H1 (cell line): ENCODE measurements at regions of chr15 and their contacts with region 1.

Region 1: DNA sequence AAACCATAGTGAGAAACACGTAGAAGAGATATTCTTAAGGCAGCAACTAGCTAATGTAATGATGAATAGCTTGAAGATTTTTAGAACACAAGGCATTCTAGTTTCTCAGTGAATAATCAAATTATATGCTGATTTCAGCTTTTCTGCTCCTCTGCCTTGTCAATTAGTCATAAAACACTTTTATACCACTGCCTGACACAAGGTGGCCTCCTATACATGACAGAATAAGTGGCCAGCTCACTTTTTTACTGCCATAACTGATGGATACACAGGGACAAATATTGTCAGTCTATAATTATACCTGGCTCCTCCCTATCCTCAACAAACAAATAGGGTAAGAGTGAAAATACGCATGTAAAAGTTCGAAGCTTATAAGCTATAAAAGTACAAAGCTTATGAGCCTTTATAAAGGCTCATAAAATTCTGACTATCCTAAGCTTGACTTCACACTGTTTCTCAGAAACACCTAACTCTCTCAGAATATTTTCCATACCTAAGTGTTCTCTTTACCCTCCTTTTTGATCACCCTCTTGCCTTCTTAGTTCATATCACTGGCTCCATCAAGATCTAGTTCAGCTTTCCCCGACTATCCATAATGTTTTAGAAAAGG is 81.6 kb downstream of the HERC1 start:
- DNase-seq: no peak
- H3K4me3 ChIP-seq: no peak overlapping the region
- H3K27ac ChIP-seq: no peak overlapping the region
- H3K4me1 ChIP-seq: no peaks in the 10 kb centered on the region
- H3K27me3 ChIP-seq: no peaks in the 10 kb centered on the region
- CTCF ChIP-seq: peak in 2 of 3 experiments; percentile 68 to 70; a peak in 3 of 4 replicates
- EP300 ChIP-seq: no peak
- POLR2A ChIP-seq: no peak
- RAD21 ChIP-seq: peak; percentile 90 to 93

Region 2: DNA sequence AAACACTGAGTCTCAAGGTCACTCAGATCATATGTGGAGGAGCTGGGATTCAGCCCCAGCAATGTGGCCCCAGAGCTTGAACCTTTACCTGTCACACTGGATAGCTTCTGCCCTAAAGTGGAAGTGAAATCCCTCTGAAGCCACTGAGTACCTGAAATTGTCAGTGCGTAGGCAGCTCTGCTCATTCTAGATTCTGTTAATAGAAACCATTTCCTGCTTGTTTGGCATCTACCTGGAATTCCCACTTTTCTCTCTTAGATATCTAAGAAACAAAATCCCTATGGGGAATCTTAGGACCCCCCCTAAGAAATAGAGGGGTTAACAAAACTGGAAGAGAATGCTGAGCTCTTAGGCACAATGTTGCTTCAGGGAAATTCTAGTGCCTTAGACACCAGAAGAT is 125.2 kb before region 1 on chr15:
- CTCF ChIA-PET with region 1: no interaction called
- POLR2A ChIA-PET with region 1: no interaction called
- DNase-seq: no peak
- H3K4me3 ChIP-seq: no peak overlapping the region
- H3K27ac ChIP-seq: no peak overlapping the region
- H3K4me1 ChIP-seq: no peaks in the 10 kb centered on the region
- H3K27me3 ChIP-seq: no peaks in the 10 kb centered on the region
- CTCF ChIP-seq: no peak
- EP300 ChIP-seq: no peak
- POLR2A ChIP-seq: no peak
- RAD21 ChIP-seq: no peak

Region 3: DNA sequence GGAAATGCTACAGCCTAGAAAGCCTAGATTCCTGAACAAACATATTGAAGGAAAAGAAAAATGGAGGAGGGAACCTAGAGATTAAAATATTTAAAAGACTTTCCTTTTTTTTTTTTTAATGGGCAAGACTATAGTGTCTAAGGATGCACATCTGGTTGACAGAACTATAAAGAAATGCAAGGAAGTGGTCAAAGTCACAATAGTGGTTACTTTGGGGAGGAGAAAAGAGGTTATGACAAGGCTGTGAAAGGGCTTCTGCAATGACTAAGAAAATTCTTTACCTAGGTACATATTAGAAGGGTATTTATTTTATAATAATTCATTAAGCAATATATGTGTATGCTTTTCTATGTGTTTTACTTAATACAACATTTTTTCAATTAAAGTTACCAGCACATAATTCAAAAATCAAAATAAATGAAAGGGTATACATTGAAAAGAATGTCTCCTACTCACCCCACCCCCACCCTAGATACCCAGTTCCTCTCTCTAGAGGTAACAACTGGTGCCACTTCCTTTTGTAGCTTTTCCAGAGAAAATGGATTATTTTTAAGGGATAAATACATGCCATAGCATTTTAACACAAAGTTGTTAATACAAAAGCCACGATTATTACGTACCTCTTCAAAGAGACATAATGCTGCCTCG is 11.4 kb after region 1 on chr15:
- CTCF ChIA-PET with region 1: interaction called, 15 read pairs
- POLR2A ChIA-PET with region 1: interaction called, 5 read pairs
- DNase-seq: no peak
- H3K4me3 ChIP-seq: peak overlapping the region in 1 of 4 experiments; percentile 12; a peak in 1 of 8 replicates
- H3K27ac ChIP-seq: peak overlapping the region; percentile 80; the same call in 1 of the 2 replicates
- H3K4me1 ChIP-seq: peaks cover 9 to 47% (median 20%) of the 10 kb centered on the region in 4 experiments
- H3K27me3 ChIP-seq: no peaks in the 10 kb centered on the region
- CTCF ChIP-seq: no peak
- EP300 ChIP-seq: no peak
- POLR2A ChIP-seq: no peak
- RAD21 ChIP-seq: no peak

Region 4: DNA sequence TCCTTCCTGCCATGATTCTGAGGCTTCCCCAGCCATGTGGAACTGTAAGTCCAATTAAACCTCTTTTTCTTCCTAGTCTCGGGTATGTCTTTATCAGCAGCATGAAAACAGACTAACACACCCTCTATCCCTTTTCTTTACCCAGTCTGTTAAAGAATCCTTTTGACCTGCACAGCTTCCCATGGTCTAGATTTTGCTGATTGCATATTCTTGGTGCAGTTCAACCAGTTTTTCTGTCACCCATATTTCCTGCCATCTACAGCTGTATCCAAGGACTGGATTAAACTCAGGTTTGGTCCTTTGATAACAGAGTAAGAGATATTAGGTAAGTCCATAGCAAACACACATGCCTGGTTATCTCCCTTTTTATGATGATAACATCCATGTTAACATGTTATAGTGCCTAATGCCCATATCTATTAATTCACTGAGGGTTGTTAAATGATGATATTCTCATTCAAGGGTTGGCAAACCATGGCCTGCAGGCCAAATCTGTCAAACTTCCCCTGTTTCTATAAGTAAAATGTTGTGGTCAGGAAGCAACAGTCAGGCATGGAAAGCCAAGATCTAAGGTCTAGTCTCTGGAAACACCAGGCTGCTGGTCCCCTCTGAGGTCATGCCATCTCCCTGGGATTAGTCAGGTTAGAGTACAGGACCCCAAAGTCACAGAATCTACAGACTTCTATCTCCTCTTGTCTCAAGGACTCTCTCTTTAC is 96.5 kb after region 1 on chr15:
- CTCF ChIA-PET with region 1: interaction called, 10 read pairs
- POLR2A ChIA-PET with region 1: no interaction called
- DNase-seq: no peak
- H3K4me3 ChIP-seq: no peak overlapping the region
- H3K27ac ChIP-seq: no peak overlapping the region
- H3K4me1 ChIP-seq: peaks cover 0 to 2% (median 0%) of the 10 kb centered on the region in 4 experiments; a peak in 2 of 7 replicates
- H3K27me3 ChIP-seq: no peaks in the 10 kb centered on the region
- CTCF ChIP-seq: no peak
- EP300 ChIP-seq: no peak
- POLR2A ChIP-seq: no peak
- RAD21 ChIP-seq: no peak

Region 5: DNA sequence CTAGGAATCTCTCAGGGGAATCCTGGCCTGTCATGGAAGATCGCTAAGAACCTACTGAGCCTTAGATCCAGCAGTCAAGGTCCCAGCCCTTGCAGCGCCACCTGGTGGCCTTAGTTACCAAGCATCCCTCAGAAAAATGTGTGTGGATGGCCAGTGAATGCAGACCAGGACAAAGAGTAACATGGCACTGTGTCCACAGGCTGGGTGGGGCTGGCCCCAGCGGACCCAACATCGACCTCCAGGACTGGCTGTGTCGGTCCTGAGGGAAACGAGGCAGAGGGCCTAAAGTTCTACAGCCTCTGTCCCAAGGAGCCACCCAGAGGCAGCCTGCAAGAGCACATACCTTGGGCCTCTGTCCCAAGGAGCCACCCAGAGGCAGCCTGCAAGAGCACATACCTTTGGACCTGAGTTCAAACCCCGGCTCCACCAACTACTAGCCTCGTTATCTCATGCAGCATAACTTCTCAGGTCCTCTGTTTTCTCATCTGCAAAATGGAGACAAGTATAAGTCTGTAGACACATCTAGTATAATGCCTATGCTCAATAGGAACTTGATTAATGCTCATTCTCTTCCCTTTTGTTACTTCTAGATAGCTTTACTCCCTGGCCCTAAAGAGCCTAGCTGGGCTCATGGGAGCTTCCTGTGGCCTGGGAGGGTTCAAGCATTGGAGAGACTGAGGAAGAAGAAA is 139.0 kb after region 1 on chr15:
- CTCF ChIA-PET with region 1: interaction called, 74 read pairs
- POLR2A ChIA-PET with region 1: no interaction called
- DNase-seq: peak; percentile 80 to 94
- H3K4me3 ChIP-seq: no peak overlapping the region
- H3K27ac ChIP-seq: no peak overlapping the region
- H3K4me1 ChIP-seq: peaks cover 0 to 3% (median 0%) of the 10 kb centered on the region in 4 experiments; a peak in 1 of 7 replicates
- H3K27me3 ChIP-seq: no peaks in the 10 kb centered on the region
- CTCF ChIP-seq: peak; percentile 88 to 91 (median 90)
- EP300 ChIP-seq: no peak
- POLR2A ChIP-seq: no peak
- RAD21 ChIP-seq: peak; percentile 86 to 90

Region 6: DNA sequence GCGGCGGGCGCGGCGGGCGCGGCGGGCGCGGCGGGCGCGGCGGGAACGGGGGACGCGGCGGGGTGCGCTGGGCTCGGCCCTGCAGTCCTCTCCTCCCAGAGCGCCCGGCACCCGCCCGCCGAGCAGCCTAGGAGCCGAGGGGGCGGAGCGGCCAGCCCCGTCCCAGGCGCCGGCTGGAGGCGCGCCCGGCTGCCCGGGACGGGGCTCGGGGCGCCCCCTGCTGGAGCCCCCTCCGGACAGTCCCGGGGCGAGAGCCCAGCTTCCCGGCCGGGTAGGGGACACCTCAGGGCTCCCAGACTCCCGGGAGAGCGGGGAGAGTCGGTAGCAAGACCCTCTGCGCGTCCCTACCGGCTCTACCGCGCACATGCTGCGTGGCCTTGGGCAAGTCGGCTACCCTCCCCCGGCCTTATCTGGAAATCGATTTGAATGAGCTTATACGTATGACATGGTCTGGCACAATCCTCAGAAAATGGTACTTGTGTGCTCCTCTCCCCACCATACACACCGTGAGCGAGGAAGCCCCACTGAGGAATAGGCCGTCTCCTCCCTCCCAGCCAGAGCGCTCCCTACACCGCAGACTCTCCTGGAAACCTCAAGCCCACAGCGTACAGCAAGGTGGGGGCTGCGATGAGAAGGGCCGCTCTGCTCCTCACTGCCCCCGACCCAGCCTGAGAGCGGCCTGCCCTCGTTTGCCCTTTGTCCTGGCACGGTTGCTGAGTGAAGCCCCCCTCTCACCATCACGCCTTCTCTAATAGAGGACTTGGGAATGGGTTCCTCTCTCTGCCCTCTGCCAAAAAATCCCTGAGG is 294.4 kb after region 1 on chr15 and contains the start of gene DAPK2:
- CTCF ChIA-PET with region 1: interaction called, 13 read pairs
- POLR2A ChIA-PET with region 1: no interaction called
- DNase-seq: peak in 1 of 2 experiments; percentile 86
- H3K4me3 ChIP-seq: peak within 1 kb of the TSS; percentile 41 to 70 (median 48)
- H3K27ac ChIP-seq: no peak within 1 kb of the TSS
- H3K4me1 ChIP-seq: peaks cover 0 to 15% (median 5%) of the 10 kb centered on the region in 4 experiments; a peak in 4 of 7 replicates
- H3K27me3 ChIP-seq: peaks cover 3 to 31% (median 19%) of the 10 kb centered on the region in 4 experiments; a peak in 6 of 7 replicates
- CTCF ChIP-seq: peak; percentile 53 to 78 (median 58)
- EP300 ChIP-seq: no peak
- POLR2A ChIP-seq: no peak
- RAD21 ChIP-seq: peak; percentile 46 to 75
- total RNA-seq, gene DAPK2: 2.2 and 2.9 TPM in 2 replicates